ENCODE measurements at regions of chr22 and their contacts with region 1.

Region 1: GRCh38 chr22:49917974-49918910 is at the starts of genes ALG12 and CRELD2:
- DNase-seq: peak; percentile 98
- H3K4me3 ChIP-seq: peak within 1 kb of the TSS; percentile 60 to 90 (median 73)
- H3K27ac ChIP-seq: peak within 1 kb of the TSS; percentile 78
- H3K4me1 ChIP-seq: peaks cover 14% of the 10 kb centered on the region
- H3K27me3 ChIP-seq: no peaks in the 10 kb centered on the region
- CTCF ChIP-seq: no peak
- POLR2A ChIP-seq: peak; percentile 62
- total RNA-seq, gene ALG12: 14.6 and 20.9 TPM in 2 replicates
- total RNA-seq, gene CRELD2: 69.5 and 71.0 TPM in 2 replicates

Region 2: GRCh38 chr22:49767355-49768062 is 150.7 kb before region 1 on chr22:
- CTCF ChIA-PET with region 1: interaction called, 6 read pairs
- POLR2A ChIA-PET with region 1: no interaction called
- dilution Hi-C with region 1: no loop called
- intact Hi-C with region 1: loop called (anchors 1 kb)
- DNase-seq: peak; percentile 64
- H3K4me3 ChIP-seq: no peak overlapping the region
- H3K27ac ChIP-seq: no peak overlapping the region
- H3K4me1 ChIP-seq: no peaks in the 10 kb centered on the region
- H3K27me3 ChIP-seq: no peaks in the 10 kb centered on the region
- CTCF ChIP-seq: peak; percentile 60 to 64
- POLR2A ChIP-seq: no peak

Region 3: GRCh38 chr22:49827853-49828598 is 90.2 kb before region 1 on chr22 and contains the start of gene BRD1:
- CTCF ChIA-PET with region 1: no interaction called
- POLR2A ChIA-PET with region 1: no interaction called
- dilution Hi-C with region 1: no loop called
- intact Hi-C with region 1: loop called (anchors 1 kb)
- DNase-seq: peak; percentile 47
- H3K4me3 ChIP-seq: peak within 1 kb of the TSS; percentile 56 to 93 (median 89)
- H3K27ac ChIP-seq: peak within 1 kb of the TSS; percentile 55
- H3K4me1 ChIP-seq: peaks cover 10% of the 10 kb centered on the region
- H3K27me3 ChIP-seq: peaks cover 10 to 11% of the 10 kb centered on the region in 2 experiments
- CTCF ChIP-seq: no peak
- POLR2A ChIP-seq: peak; percentile 19
- total RNA-seq, gene BRD1: 38.8 and 41.1 TPM in 2 replicates

Region 4: GRCh38 chr22:49852898-49853894 is 65.0 kb before region 1 on chr22 and contains the start of gene ZBED4:
- CTCF ChIA-PET with region 1: no interaction called
- POLR2A ChIA-PET with region 1: no interaction called
- dilution Hi-C with region 1: no loop called
- intact Hi-C with region 1: loop called (anchors 1 kb)
- DNase-seq: peak; percentile 97
- H3K4me3 ChIP-seq: peak within 1 kb of the TSS; percentile 83 to 99 (median 86)
- H3K27ac ChIP-seq: peak within 1 kb of the TSS; percentile 74
- H3K4me1 ChIP-seq: peaks cover 22% of the 10 kb centered on the region
- H3K27me3 ChIP-seq: peaks cover 8 to 22% of the 10 kb centered on the region in 2 experiments
- CTCF ChIP-seq: no peak
- POLR2A ChIP-seq: peak; percentile 78
- total RNA-seq, gene ZBED4: 18.2 and 18.6 TPM in 2 replicates

Region 5: DNA sequence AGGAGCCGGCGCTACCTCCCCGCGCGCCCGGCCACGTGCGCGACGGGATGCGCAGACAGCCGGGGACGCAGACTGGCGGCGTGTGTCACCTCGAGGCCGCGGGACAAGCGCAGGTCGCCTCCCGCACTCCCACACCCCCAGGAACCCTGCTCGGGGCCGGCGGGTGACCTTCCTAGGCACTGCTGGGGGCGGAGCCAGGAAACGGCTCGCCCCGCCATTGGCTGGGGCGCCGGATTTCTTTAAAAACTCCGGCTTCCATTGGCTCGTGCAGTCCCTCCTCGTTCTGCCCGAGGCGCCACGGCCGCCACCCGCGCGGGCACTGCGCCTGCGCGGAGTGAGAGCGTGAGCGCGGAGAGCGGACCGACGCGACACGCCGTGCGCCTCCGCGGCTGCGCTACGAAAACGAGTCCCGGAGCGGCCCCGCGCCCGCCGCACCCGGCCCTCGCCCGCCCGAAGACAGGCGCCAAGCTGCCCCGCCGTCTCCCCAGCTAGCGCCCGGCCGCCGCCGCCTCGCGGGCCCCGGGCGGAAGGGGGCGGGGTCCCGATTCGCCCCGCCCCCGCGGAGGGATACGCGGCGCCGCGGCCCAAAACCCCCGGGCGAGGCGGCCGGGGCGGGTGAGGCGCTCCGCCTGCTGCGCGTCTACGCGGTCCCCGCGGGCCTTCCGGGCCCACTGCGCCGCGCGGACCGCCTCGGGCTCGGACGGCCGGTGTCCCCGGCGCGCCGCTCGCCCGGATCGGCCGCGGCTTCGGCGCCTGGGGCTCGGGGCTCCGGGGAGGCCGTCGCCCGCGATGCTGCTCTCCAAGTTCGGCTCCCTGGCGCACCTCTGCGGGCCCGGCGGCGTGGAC is 42.1 kb after region 1 on chr22 and contains the start of gene PIM3:
- CTCF ChIA-PET with region 1: interaction called, 3 read pairs
- POLR2A ChIA-PET with region 1: no interaction called
- dilution Hi-C with region 1: no loop called
- intact Hi-C with region 1: loop called (anchors 1 kb)
- DNase-seq: peak; percentile 97
- H3K4me3 ChIP-seq: peak within 1 kb of the TSS; percentile 52 to 80 (median 59)
- H3K27ac ChIP-seq: peak within 1 kb of the TSS; percentile 80
- H3K4me1 ChIP-seq: peaks cover 25% of the 10 kb centered on the region
- H3K27me3 ChIP-seq: no peaks in the 10 kb centered on the region
- CTCF ChIP-seq: no peak
- POLR2A ChIP-seq: peak; percentile 96
- total RNA-seq, gene PIM3: 185 and 219 TPM in 2 replicates

Measured in endothelial cell of umbilical vein (primary cell).